CD8-positive, alpha-beta T cell (primary cell): ENCODE measurements at regions of chr17 and their contacts with region 1.

Region 1: DNA sequence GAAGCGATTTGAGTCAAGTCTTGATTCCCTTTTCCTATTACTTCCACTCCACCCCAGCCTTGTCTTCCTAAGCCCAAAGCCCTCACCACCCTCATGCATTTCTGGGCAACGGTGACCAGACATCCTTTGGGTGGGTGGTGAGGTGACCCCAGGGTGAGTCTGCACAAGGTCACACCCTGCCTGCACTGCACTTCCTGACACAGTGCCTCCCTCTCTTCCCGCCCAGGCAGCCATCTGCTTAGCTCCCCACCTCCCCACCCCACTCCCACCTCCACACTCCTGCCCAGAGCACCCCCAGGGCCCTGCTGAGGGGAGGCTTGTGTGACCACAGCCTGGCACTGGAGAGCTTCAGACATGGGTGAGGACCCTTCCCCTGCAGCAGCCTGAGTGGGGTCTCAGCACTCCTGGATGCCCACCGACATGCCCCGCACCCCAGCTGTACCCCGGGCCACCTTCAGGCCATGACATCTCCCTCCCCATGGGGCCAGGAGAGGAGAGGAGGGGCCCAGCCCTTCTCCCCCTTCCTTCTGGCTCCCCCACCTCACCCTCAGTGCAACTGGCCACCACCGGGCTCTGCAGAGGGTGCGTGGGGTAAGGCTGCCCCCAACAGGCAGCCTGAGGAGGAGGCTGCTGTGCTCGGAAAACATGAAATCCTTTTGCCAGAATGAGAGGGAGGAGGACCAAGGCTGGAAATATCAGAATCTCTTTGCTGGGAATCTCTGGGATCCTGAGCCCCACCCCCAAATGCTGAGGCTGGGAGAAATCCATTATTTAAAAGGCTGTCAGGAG is 68.6 kb downstream of the CCT6B start:
- DNase-seq: peak in 3 of 9 experiments; percentile 10 to 32 (median 27)
- ATAC-seq: no peak
- H3K4me3 ChIP-seq: no peak overlapping the region
- H3K4me3 Mint-ChIP-seq: no peak overlapping the region
- H3K27ac ChIP-seq: no peak overlapping the region
- H3K27ac Mint-ChIP-seq: no peak overlapping the region
- H3K4me1 ChIP-seq: no peaks in the 10 kb centered on the region
- H3K4me1 Mint-ChIP-seq: no peaks in the 10 kb centered on the region
- H3K27me3 ChIP-seq: peaks cover 0 to 4% of the 10 kb centered on the region in 2 experiments
- H3K27me3 Mint-ChIP-seq: peaks cover 35% of the 10 kb centered on the region
- CTCF ChIP-seq: no peak

Region 2: GRCh38 chr17:34413443-34414119 is 479.1 kb before region 1 on chr17:
- CTCF ChIA-PET with region 1: no interaction called
- POLR2A ChIA-PET with region 1: no interaction called
- intact Hi-C with region 1: loop called in 1 of 2 experiments (anchors 10 kb)
- DNase-seq: no peak
- ATAC-seq: no peak
- H3K4me3 ChIP-seq: no peak overlapping the region
- H3K4me3 Mint-ChIP-seq: no peak overlapping the region
- H3K27ac ChIP-seq: no peak overlapping the region
- H3K27ac Mint-ChIP-seq: no peak overlapping the region
- H3K4me1 ChIP-seq: no peaks in the 10 kb centered on the region
- H3K4me1 Mint-ChIP-seq: no peaks in the 10 kb centered on the region
- H3K27me3 ChIP-seq: no peaks in the 10 kb centered on the region
- H3K27me3 Mint-ChIP-seq: peaks cover 10% of the 10 kb centered on the region
- CTCF ChIP-seq: no peak

Region 3: DNA sequence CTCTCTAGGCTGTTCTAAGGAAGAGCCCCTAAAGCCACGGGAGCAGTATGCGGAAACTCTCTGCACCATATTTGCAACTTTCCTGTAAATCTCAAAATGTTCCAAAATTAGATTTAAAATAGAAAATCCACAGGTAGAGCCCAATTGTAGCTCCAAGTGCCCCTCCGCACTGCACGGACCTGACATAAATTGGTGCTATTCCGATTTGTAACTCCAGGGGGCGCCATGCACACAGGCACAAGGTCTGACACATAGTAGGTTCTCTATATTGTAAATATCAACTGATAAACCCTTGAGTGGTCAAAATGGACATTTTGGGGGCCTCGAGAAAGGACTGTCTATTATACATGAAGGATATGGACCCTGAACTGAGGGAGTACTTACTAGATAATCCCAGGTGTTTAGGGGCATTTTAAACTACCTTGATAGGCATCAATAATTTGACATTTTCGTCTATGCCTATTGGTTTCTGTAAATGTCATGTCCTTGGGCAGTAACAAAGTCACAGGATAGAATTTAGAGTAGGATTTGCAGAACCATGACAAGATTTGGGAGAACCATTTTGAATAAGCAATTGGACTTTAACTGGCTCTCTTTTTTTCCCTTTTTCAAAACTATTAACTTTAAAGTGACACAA is 349.8 kb before region 1 on chr17:
- CTCF ChIA-PET with region 1: interaction called, 4 read pairs
- POLR2A ChIA-PET with region 1: no interaction called
- intact Hi-C with region 1: loop called in 1 of 2 experiments (anchors 2 kb)
- DNase-seq: peak in 8 of 9 experiments; percentile 16 to 71 (median 59)
- ATAC-seq: no peak
- H3K4me3 ChIP-seq: no peak overlapping the region
- H3K4me3 Mint-ChIP-seq: no peak overlapping the region
- H3K27ac ChIP-seq: no peak overlapping the region
- H3K27ac Mint-ChIP-seq: no peak overlapping the region
- H3K4me1 ChIP-seq: no peaks in the 10 kb centered on the region
- H3K4me1 Mint-ChIP-seq: no peaks in the 10 kb centered on the region
- H3K27me3 ChIP-seq: no peaks in the 10 kb centered on the region
- H3K27me3 Mint-ChIP-seq: peaks cover 32% of the 10 kb centered on the region
- CTCF ChIP-seq: peak; percentile 71

Region 4: DNA sequence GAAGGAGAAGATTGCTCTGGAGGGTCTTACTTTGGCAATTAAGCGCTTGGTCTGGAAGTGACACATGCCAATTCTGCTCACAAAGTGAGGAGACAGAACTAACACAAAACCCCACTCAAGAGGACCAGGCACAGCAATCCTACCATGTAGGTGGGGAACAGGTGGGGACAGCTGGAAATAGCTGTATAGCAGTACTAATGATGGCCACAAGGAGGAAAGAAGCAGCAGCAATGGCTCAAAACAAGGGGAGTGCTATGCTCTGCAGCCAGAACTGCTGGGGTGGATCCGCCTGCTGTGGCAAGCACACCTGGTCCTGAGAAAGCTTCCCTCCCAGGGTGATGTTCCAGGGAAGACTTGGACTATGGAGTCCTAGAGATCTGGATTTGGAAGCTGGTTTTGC is 330.3 kb before region 1 on chr17:
- CTCF ChIA-PET with region 1: no interaction called
- POLR2A ChIA-PET with region 1: no interaction called
- intact Hi-C with region 1: loop called in 1 of 2 experiments (anchors 5 kb)
- DNase-seq: peak in 2 of 9 experiments; percentile 35 to 51
- ATAC-seq: peak; percentile 75
- H3K4me3 ChIP-seq: no peak overlapping the region
- H3K4me3 Mint-ChIP-seq: no peak overlapping the region
- H3K27ac ChIP-seq: no peak overlapping the region
- H3K27ac Mint-ChIP-seq: no peak overlapping the region
- H3K4me1 ChIP-seq: no peaks in the 10 kb centered on the region
- H3K4me1 Mint-ChIP-seq: no peaks in the 10 kb centered on the region
- H3K27me3 ChIP-seq: peaks cover 0 to 4% of the 10 kb centered on the region in 2 experiments
- H3K27me3 Mint-ChIP-seq: peaks cover 12% of the 10 kb centered on the region
- CTCF ChIP-seq: peak; percentile 52

Region 5: GRCh38 chr17:34852614-34853013 is 40.0 kb before region 1 on chr17:
- CTCF ChIA-PET with region 1: no interaction called
- POLR2A ChIA-PET with region 1: no interaction called
- intact Hi-C with region 1: no loop called
- DNase-seq: no peak
- ATAC-seq: no peak
- H3K4me3 ChIP-seq: no peak overlapping the region
- H3K4me3 Mint-ChIP-seq: no peak overlapping the region
- H3K27ac ChIP-seq: no peak overlapping the region
- H3K27ac Mint-ChIP-seq: no peak overlapping the region
- H3K4me1 ChIP-seq: no peaks in the 10 kb centered on the region
- H3K4me1 Mint-ChIP-seq: peaks cover 4% of the 10 kb centered on the region
- H3K27me3 ChIP-seq: no peaks in the 10 kb centered on the region
- H3K27me3 Mint-ChIP-seq: no peaks in the 10 kb centered on the region
- CTCF ChIP-seq: no peak

Region 6: GRCh38 chr17:34879146-34879545 is 13.5 kb before region 1 on chr17:
- CTCF ChIA-PET with region 1: no interaction called
- POLR2A ChIA-PET with region 1: no interaction called
- intact Hi-C with region 1: no loop called
- DNase-seq: no peak
- ATAC-seq: no peak
- H3K4me3 ChIP-seq: no peak overlapping the region
- H3K4me3 Mint-ChIP-seq: no peak overlapping the region
- H3K27ac ChIP-seq: no peak overlapping the region
- H3K27ac Mint-ChIP-seq: no peak overlapping the region
- H3K4me1 ChIP-seq: no peaks in the 10 kb centered on the region
- H3K4me1 Mint-ChIP-seq: no peaks in the 10 kb centered on the region
- H3K27me3 ChIP-seq: no peaks in the 10 kb centered on the region
- H3K27me3 Mint-ChIP-seq: peaks cover 18% of the 10 kb centered on the region
- CTCF ChIP-seq: no peak